ENCODE measurements at regions of chr15 and their contacts with region 1.

Region 1: DNA sequence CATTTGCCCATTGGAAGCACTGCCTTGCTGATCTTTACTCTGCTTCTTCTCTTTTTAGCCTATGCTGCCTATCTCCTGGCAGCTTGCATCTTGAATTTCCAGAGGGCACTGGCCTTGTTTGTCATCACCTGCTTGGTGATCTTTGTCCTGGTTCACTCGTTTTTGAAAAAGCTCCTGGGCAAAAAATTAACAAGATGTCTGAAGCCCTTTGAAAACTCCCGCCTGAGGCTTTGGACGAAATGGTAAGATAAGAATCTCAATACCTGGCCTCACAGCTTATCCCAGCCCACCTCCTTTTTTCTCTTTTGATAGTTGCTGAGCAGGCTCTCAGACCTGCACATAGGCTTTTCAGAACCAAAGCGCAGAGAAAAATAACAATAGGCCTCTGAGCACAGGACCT is 11.0 kb downstream of the SLC28A2 start:
- DNase-seq: peak; percentile 60 to 66
- H3K4me3 ChIP-seq: no peak overlapping the region
- H3K4me3 Mint-ChIP-seq: peak overlapping the region; percentile 13
- H3K27ac Mint-ChIP-seq: peak overlapping the region; percentile 55
- H3K4me1 ChIP-seq: peaks cover 20% of the 10 kb centered on the region
- H3K4me1 Mint-ChIP-seq: peaks cover 19% of the 10 kb centered on the region
- H3K27me3 ChIP-seq: no peaks in the 10 kb centered on the region
- H3K27me3 Mint-ChIP-seq: no peaks in the 10 kb centered on the region
- CTCF ChIP-seq: no peak

Region 2: DNA sequence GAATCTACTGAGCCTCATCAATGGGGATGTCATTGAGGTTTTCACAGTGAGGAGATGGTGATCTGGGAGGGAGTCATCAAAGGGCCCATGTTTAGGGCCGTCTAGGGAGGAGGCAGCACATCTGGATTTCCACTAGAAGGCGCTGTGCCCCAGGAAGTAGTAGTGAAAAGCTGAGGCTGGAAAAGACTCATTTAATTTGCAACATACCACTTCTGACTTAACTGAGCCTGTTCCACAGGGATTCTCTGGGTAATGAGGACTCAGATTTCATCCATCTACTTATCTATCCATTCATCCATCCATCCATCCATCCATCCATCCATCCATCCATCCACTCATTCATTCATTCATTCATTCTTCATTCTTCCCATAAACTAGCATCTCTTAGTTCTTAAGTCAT is 57.8 kb before region 1 on chr15:
- CTCF ChIA-PET with region 1: interaction called, 3 read pairs
- POLR2A ChIA-PET with region 1: no interaction called
- intact Hi-C with region 1: loop called (anchors 1 kb)
- DNase-seq: peak; percentile 75 to 80
- H3K4me3 ChIP-seq: no peak overlapping the region
- H3K4me3 Mint-ChIP-seq: no peak overlapping the region
- H3K27ac Mint-ChIP-seq: no peak overlapping the region
- H3K4me1 ChIP-seq: 0 out of 2 replicates have a peak, but pooled peaks cover 5% of the 10 kb centered on the region
- H3K4me1 Mint-ChIP-seq: no peaks in the 10 kb centered on the region
- H3K27me3 ChIP-seq: no peaks in the 10 kb centered on the region
- H3K27me3 Mint-ChIP-seq: no peaks in the 10 kb centered on the region
- CTCF ChIP-seq: peak; percentile 78 to 83

Measured in Caco-2 (cell line).